Activated B cell treated with CpG ODN at 0.5 μM for 24 hours (primary cell): ENCODE measurements at regions of chr7 and their contacts with region 1.

Region 1: GRCh38 chr7:7595451-7595850 is 28.8 kb downstream of the MIOS start:
- DNase-seq: no peak
- ATAC-seq: peak; percentile 56
- H3K4me3 Mint-ChIP-seq: no peak overlapping the region
- H3K27ac Mint-ChIP-seq: no peak overlapping the region
- H3K4me1 Mint-ChIP-seq: no peaks in the 10 kb centered on the region
- H3K27me3 Mint-ChIP-seq: no peaks in the 10 kb centered on the region
- CTCF ChIP-seq: no peak

Region 2: GRCh38 chr7:6057316-6058129 is 1537.9 kb before region 1 on chr7:
- CTCF ChIA-PET with region 1: no interaction called
- POLR2A ChIA-PET with region 1: interaction called, 10 read pairs
- intact Hi-C with region 1: no loop called
- DNase-seq: no peak
- ATAC-seq: no peak
- H3K4me3 Mint-ChIP-seq: peak overlapping the region; percentile 96
- H3K27ac Mint-ChIP-seq: peak overlapping the region; percentile 94
- H3K4me1 Mint-ChIP-seq: peaks cover 26% of the 10 kb centered on the region
- H3K27me3 Mint-ChIP-seq: no peaks in the 10 kb centered on the region
- CTCF ChIP-seq: no peak

Region 3: GRCh38 chr7:7772397-7772821 is 177.0 kb after region 1 on chr7:
- CTCF ChIA-PET with region 1: no interaction called
- POLR2A ChIA-PET with region 1: no interaction called
- intact Hi-C with region 1: no loop called
- DNase-seq: no peak
- ATAC-seq: peak; percentile 78
- H3K4me3 Mint-ChIP-seq: peak overlapping the region; percentile 84
- H3K27ac Mint-ChIP-seq: peak overlapping the region; percentile 93
- H3K4me1 Mint-ChIP-seq: peaks cover 46% of the 10 kb centered on the region
- H3K27me3 Mint-ChIP-seq: no peaks in the 10 kb centered on the region
- CTCF ChIP-seq: no peak

Region 4: DNA sequence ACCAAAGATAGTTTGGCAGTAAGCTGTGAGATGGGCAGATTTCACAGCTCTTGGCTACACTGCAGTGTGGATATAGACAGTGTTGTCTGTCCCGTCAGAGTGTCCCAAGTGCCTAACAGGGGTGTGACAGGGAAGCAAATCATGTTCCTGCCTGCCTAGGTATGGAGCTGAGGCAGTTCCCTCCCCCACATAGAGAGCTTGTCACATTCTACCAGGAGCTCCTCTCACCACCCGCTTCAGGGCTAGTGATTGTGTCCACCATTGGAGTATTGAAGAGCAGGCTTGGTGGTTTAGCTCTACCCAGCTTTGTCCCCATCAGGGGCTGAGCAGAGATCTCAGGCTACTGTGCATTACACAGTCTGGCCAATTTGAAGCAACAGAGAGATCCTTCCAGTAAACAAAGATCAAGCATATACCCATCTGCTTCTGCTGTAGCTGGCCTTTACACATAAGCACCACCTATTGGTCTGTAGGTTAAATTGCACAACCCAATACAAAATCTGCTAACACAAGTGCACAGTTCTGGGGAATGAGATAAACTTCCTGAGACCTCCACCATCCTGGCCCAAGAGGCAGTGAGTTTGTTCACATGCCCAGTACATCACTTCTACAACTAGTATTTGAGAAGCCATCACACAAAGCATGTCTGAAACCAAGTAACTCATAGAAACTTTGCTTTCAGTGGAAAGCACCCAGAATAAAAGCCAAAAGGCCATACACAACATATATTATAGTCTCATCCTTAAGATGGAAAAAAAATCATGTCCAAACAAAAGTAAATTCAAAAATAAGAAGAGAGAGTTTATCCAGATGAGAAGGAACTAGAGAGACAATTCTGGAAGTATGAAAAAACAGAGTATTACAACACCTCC is 440.4 kb after region 1 on chr7:
- CTCF ChIA-PET with region 1: interaction called, 4 read pairs
- POLR2A ChIA-PET with region 1: interaction called, 6 read pairs
- intact Hi-C with region 1: loop called (anchors 1 kb)
- DNase-seq: no peak
- ATAC-seq: peak; percentile 92
- H3K4me3 Mint-ChIP-seq: no peak overlapping the region
- H3K27ac Mint-ChIP-seq: peak overlapping the region; percentile 21
- H3K4me1 Mint-ChIP-seq: peaks cover 10% of the 10 kb centered on the region
- H3K27me3 Mint-ChIP-seq: no peaks in the 10 kb centered on the region
- CTCF ChIP-seq: no peak

Region 5: GRCh38 chr7:8190119-8190895 is 594.9 kb after region 1 on chr7:
- CTCF ChIA-PET with region 1: interaction called, 26 read pairs
- POLR2A ChIA-PET with region 1: no interaction called
- intact Hi-C with region 1: loop called (anchors 1 kb)
- DNase-seq: no peak
- ATAC-seq: peak; percentile 87
- H3K4me3 Mint-ChIP-seq: no peak overlapping the region
- H3K27ac Mint-ChIP-seq: no peak overlapping the region
- H3K4me1 Mint-ChIP-seq: peaks cover 20% of the 10 kb centered on the region
- H3K27me3 Mint-ChIP-seq: no peaks in the 10 kb centered on the region
- CTCF ChIP-seq: no peak

Region 6: DNA sequence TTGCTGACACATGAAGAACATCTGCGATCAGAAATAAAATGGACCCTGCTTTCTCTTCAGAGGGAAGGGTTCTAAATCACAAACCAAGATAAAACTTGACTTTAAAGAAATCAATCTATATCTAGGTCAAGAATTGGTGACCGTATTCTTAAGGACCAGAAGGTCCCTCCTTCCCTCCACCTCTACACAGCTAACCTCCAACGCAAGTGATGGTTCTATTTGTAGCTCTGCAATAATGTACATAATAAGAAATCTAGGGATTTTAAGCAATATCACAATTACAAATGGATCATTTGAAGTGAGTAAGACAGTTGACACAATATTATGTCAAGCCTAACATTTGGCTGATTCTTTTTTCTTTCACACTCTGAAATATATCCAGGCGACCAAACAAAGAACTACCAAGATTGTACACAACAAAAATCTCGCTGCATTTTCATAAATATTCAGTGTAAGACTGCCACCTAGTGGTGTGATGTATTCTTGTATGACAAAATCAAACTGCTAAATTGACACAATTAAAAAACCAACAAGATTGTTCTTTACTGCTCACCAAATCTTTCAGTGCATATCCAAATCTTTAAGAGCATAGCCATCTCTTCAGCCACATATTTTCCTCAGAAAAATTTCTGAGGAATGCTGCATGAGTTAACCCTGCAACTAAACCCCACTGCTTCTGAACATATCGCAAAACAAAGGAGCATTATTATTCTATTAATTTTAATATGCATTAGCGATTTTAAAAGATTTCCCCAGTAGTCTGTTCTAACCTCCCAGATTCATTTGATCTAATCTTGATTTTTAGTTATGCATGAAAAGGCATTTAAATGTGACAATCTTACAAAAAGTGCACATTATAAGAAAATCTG is 622.0 kb after region 1 on chr7:
- CTCF ChIA-PET with region 1: interaction called, 24 read pairs
- POLR2A ChIA-PET with region 1: no interaction called
- intact Hi-C with region 1: loop called (anchors 1 kb)
- DNase-seq: no peak
- ATAC-seq: no peak
- H3K4me3 Mint-ChIP-seq: no peak overlapping the region
- H3K27ac Mint-ChIP-seq: no peak overlapping the region
- H3K4me1 Mint-ChIP-seq: no peaks in the 10 kb centered on the region
- H3K27me3 Mint-ChIP-seq: no peaks in the 10 kb centered on the region
- CTCF ChIP-seq: no peak